Naive thymus-derived CD4-positive, alpha-beta T cell (primary cell): ENCODE measurements at regions of chr2 and their contacts with region 1.

Region 1: DNA sequence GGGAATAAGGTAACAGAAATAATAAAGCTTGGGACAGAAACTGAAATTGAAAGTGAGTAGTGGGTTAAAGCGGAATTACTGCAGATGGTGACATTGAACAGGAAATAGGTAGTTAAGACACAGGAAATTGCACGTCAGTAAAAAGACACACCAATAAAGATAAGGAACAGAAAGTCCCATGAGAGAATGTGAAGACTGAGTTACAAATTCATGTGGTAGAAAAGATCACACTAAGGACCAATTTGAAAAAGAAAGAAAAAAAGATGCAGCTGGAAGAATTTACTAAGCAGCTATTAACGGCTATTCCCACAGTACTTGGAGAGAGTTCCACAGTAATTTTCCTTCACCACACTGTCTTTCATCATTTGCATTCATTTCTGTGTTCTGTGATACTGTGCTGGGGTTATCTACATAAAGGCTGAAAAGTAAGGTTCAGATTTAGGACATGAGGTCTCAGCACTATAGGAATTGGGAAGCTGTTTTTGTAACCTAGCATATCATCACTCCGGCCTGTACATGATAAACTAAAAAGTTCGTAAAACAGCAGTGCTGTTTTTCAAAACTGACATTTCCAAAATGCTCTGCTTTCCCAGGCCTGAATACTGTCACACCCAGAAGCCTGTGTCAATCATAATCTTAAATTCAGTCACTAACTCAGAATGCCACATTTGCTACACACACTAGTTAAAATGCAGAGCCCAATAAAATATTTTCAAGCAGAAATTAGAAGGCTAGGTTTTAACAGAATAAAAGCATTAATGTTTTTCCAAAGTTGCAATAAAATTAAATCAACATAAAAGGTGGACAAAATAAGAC is 42.9 kb downstream of the SRBD1 start:
- DNase-seq: peak in 7 of 9 donors; percentile 65 to 83 (median 80)
- ATAC-seq: peak; percentile 98
- H3K4me3 ChIP-seq: peak overlapping the region; percentile 54
- H3K4me3 Mint-ChIP-seq: peak overlapping the region; percentile 73 to 96 (median 88)
- H3K27ac ChIP-seq: peak overlapping the region; percentile 76
- H3K27ac Mint-ChIP-seq: peak overlapping the region; percentile 90 to 98 (median 94)
- H3K4me1 ChIP-seq: peaks cover 12 to 14% of the 10 kb centered on the region in 2 donors
- H3K4me1 Mint-ChIP-seq: peaks cover 15 to 49% (median 39%) of the 10 kb centered on the region in 7 donors
- H3K27me3 ChIP-seq: no peaks in the 10 kb centered on the region
- H3K27me3 Mint-ChIP-seq: no peaks in the 10 kb centered on the region

Region 2: DNA sequence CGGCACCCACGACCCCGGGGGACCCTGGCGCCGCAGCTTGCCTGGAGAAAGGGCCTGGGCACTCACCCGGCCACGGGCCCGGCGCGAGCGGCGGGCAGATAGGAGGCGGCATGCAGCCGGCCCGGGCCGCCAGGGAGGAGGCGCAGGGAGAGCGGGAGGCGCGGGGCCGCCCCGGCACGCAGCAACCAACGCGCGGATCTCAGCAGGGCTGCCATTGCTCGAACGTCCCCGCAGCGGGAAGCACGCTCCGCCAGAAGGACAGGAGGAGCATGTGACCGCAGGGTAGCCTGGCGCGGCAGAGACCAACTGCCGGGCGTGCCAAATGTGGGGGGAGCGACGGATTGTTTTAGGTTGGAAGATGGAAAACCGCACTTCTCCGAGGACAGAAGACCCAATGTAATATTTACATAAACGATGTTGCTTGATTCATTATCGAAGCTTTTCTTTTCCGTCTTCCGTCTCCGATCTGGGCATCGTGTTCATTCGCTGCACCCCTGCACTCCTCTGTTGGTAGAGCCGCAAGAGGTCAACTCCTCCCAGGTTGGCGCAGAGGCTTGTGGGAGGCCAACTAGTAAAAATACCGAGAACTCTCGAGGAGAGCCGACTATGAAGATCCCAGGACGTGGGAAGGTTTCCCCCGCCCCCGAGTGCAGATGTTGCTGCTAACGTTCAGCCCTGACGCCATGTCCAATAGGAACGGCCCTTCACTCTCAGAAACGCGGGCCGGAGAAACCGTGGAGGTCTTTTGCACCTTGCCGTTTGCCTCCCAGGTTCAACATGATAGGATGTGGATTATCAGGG is 1572.2 kb before region 1 on chr2 and contains the start of gene LRPPRC:
- CTCF ChIA-PET with region 1: no interaction called
- POLR2A ChIA-PET with region 1: no interaction called
- intact Hi-C with region 1: loop called in 1 of 2 experiments (anchors 5 kb)
- DNase-seq: peak; percentile 69 to 95 (median 90)
- ATAC-seq: peak; percentile 98
- H3K4me3 ChIP-seq: peak within 1 kb of the TSS; percentile 98
- H3K4me3 Mint-ChIP-seq: peak within 1 kb of the TSS; percentile 89 to 99 (median 90)
- H3K27ac ChIP-seq: peak within 1 kb of the TSS; percentile 84
- H3K27ac Mint-ChIP-seq: peak within 1 kb of the TSS; percentile 95 to 100 (median 97)
- H3K4me1 ChIP-seq: peaks cover 9 to 25% of the 10 kb centered on the region in 2 donors
- H3K4me1 Mint-ChIP-seq: peaks cover 34 to 62% (median 52%) of the 10 kb centered on the region in 7 donors
- H3K27me3 ChIP-seq: no peaks in the 10 kb centered on the region
- H3K27me3 Mint-ChIP-seq: peaks cover 0 to 1% (median 0%) of the 10 kb centered on the region in 5 donors
- total RNA-seq, gene LRPPRC: 54.3 to 92.7 (median 71.2) TPM

Region 3: DNA sequence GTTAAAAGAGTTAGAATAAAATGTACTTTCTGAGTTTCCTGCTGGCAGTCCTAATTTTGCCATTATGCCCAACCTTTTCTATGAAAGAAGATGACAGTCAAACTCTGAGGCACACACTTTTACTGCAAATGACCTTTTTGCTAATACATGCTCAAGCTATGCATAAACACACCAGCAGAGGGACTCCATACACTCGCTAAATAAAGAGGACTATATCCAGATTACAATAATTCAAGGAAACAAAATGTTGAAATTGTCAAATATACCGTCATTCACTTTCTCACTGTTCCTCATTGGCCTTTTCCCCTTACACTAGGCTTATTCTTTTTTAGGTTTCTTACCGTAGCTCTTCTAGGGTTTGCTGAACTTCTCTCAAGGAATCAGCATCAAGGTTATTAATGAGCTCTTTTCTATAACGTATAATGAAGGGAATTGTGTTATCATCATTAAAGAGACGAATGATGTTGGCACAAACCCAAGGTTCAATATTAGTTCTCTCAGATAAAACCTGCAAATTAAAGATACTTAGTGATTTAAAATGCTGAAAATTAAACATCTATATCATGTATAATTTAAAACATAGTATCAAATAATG is 17.2 kb after region 1 on chr2:
- CTCF ChIA-PET with region 1: interaction called, 3 read pairs
- POLR2A ChIA-PET with region 1: interaction called, 4 read pairs
- intact Hi-C with region 1: loop called in 1 of 2 experiments (anchors 2 kb)
- DNase-seq: peak in 4 of 9 donors; percentile 19 to 31 (median 26)
- ATAC-seq: peak; percentile 84
- H3K4me3 ChIP-seq: no peak overlapping the region
- H3K4me3 Mint-ChIP-seq: no peak overlapping the region
- H3K27ac ChIP-seq: no peak overlapping the region
- H3K27ac Mint-ChIP-seq: no peak overlapping the region
- H3K4me1 ChIP-seq: peaks cover 0 to 5% of the 10 kb centered on the region in 2 donors
- H3K4me1 Mint-ChIP-seq: peaks cover 15 to 31% (median 25%) of the 10 kb centered on the region in 7 donors
- H3K27me3 ChIP-seq: no peaks in the 10 kb centered on the region
- H3K27me3 Mint-ChIP-seq: no peaks in the 10 kb centered on the region

Region 4: GRCh38 chr2:45611020-45611737 is 43.0 kb after region 1 on chr2 and contains the start of gene SRBD1:
- CTCF ChIA-PET with region 1: no interaction called
- POLR2A ChIA-PET with region 1: no interaction called
- intact Hi-C with region 1: loop called (anchors 1 kb)
- DNase-seq: peak; percentile 52 to 91 (median 75)
- ATAC-seq: peak; percentile 91
- H3K4me3 ChIP-seq: peak within 1 kb of the TSS; percentile 79
- H3K4me3 Mint-ChIP-seq: peak within 1 kb of the TSS; percentile 92 to 99 (median 96)
- H3K27ac ChIP-seq: peak within 1 kb of the TSS; percentile 78
- H3K27ac Mint-ChIP-seq: peak within 1 kb of the TSS; percentile 90 to 98 (median 96)
- H3K4me1 ChIP-seq: peaks cover 0 to 7% of the 10 kb centered on the region in 2 donors
- H3K4me1 Mint-ChIP-seq: peaks cover 13 to 47% (median 28%) of the 10 kb centered on the region in 7 donors
- H3K27me3 ChIP-seq: no peaks in the 10 kb centered on the region
- H3K27me3 Mint-ChIP-seq: no peaks in the 10 kb centered on the region
- total RNA-seq, gene SRBD1: 17.7 to 28.1 (median 23.3) TPM

Region 5: GRCh38 chr2:47402805-47403608 is 1834.8 kb after region 1 on chr2 and contains the start of gene MSH2:
- CTCF ChIA-PET with region 1: no interaction called
- POLR2A ChIA-PET with region 1: no interaction called
- intact Hi-C with region 1: loop called in 1 of 2 experiments (anchors 10 kb)
- DNase-seq: peak; percentile 72 to 94 (median 91)
- ATAC-seq: peak; percentile 97
- H3K4me3 ChIP-seq: peak within 1 kb of the TSS; percentile 90
- H3K4me3 Mint-ChIP-seq: peak within 1 kb of the TSS; percentile 90 to 100 (median 98)
- H3K27ac ChIP-seq: peak within 1 kb of the TSS; percentile 77
- H3K27ac Mint-ChIP-seq: peak within 1 kb of the TSS; percentile 81 to 96 (median 91)
- H3K4me1 ChIP-seq: peaks cover 9 to 12% of the 10 kb centered on the region in 2 donors
- H3K4me1 Mint-ChIP-seq: peaks cover 32 to 49% (median 40%) of the 10 kb centered on the region in 7 donors
- H3K27me3 ChIP-seq: no peaks in the 10 kb centered on the region
- H3K27me3 Mint-ChIP-seq: peaks cover 0 to 2% (median 0%) of the 10 kb centered on the region in 5 donors
- total RNA-seq, gene MSH2: 12.2 to 44.7 (median 31.4) TPM